ENCODE measurements at regions of chr3 and their contacts with region 1.

Region 1: DNA sequence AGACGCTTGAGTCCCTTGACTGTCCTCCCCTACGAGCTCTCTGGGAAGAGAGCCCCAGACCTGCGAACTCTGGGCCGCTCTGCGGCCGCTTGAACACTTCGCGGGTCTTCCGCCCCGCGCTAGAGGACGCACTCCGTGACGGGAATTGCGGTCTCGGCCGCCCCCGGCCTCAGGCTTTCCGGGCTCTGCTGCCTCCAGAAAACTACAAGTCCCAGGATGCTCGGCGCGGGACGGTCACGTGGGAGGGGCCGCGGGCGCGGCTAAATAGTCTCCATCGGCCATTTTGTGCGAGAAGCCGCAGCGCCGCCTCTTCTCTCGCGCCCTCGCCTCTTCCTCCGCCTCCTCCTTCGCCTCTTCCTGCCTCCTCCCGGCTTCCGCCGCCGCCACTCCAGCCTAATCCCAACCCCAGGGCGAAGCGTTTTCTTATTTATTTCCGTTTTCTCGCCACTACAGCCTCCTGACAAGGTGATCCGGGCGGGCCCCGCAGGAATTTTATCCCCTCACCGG is at the start of gene EIF1B:
- DNase-seq: peak; percentile 98
- ATAC-seq: peak; percentile 92
- H3K4me3 ChIP-seq: peak within 1 kb of the TSS; percentile 93
- H3K27ac ChIP-seq: peak within 1 kb of the TSS; percentile 25; the same call in 1 of the 2 replicates
- H3K4me1 ChIP-seq: peaks cover 14% of the 10 kb centered on the region; the same call in 1 of the 2 replicates
- H3K27me3 ChIP-seq: no peaks in the 10 kb centered on the region
- CTCF ChIP-seq: peak; percentile 87
- total RNA-seq, gene EIF1B: 9.0 and 10.0 TPM in 2 replicates

Region 2: DNA sequence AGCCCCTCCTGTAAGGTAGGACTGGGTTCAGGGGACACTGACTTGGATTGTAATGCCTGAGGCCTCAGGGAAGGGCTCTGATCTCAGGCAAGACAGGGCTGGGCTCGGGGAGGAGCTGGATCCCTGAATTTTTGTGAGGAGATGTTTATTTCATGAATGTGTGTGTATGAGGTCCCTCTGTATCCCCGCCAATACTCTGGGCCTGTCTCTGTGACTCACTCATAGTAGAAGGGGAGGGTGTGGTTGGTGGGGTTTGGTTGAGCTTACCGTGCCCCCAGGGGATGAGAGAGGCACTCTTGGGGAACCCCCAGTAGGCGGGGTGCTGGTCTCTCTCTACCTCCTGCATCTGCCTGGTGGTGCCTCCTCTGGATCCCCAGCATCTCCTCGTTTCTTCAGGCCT is 874.9 kb before region 1 on chr3:
- CTCF ChIA-PET with region 1: interaction called, 12 read pairs
- POLR2A ChIA-PET with region 1: no interaction called
- intact Hi-C with region 1: no loop called
- DNase-seq: no peak
- ATAC-seq: 0 out of 2 replicates have a peak, but pooled peaks have one; percentile 14
- H3K4me3 ChIP-seq: no peak overlapping the region
- H3K27ac ChIP-seq: no peak overlapping the region
- H3K4me1 ChIP-seq: peaks cover 16% of the 10 kb centered on the region
- H3K27me3 ChIP-seq: no peaks in the 10 kb centered on the region
- CTCF ChIP-seq: no peak

Region 3: GRCh38 chr3:40337136-40338108 is 28.0 kb after region 1 on chr3:
- CTCF ChIA-PET with region 1: no interaction called
- POLR2A ChIA-PET with region 1: no interaction called
- intact Hi-C with region 1: no loop called
- DNase-seq: no peak
- ATAC-seq: no peak
- H3K4me3 ChIP-seq: no peak overlapping the region
- H3K27ac ChIP-seq: no peak overlapping the region
- H3K4me1 ChIP-seq: no peaks in the 10 kb centered on the region
- H3K27me3 ChIP-seq: no peaks in the 10 kb centered on the region
- CTCF ChIP-seq: no peak

Measured in PC-3 (cell line).